ENCODE measurements at regions of chr17 and their contacts with region 1.

Region 1: DNA sequence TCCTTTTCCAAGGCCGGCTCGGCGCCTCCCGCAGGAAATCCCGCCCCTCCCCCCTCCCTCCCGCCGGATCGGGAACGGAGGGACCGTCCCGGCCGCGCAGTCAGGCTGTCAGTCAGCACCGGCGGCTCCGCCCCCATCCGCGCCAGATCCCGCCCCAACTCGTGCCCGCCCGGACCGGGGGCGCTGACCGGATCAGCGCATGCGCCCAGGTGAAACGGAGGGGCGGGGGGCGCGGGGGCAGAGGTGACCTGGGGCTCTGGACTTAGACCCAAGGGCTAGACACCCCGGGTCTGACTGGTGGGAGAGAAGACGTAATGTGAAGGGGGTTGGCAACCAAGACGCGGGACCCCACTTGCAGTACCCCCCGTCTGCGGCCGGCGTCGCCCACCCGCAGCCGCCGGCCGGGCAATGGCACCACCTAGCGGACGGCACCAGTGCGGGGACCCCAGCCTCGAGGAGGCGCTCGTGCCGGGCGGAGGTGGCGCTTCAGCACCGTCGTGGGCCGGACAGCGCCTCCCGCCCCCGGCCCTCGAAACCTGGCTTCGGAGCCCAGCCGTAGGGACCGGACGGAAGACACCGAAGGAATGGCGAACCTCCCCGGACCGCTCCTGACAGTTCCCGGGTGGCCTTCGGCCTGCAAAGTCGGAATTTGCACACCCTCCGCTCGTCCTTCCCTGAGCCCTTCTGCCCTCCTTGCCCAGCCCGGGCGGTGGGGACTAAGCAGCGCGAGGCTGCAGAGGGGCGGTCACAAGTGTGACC is at the start of gene CASKIN2:
- DNase-seq: peak; percentile 77 to 99
- H3K4me3 ChIP-seq: peak within 1 kb of the TSS; percentile 79 to 92 (median 82)
- H3K27ac ChIP-seq: peak within 1 kb of the TSS; percentile 59
- H3K4me1 ChIP-seq: peaks cover 0 to 14% (median 8%) of the 10 kb centered on the region in 4 experiments; a peak in 6 of 7 replicates
- H3K27me3 ChIP-seq: no peaks in the 10 kb centered on the region
- CTCF ChIP-seq: peak; percentile 96 to 100 (median 100)
- EP300 ChIP-seq: 0 out of 3 replicates have a peak, but pooled peaks of 1 of the 2 experiments have one; percentile 21
- POLR2A ChIP-seq: no peak
- RAD21 ChIP-seq: peak; percentile 47 to 77
- total RNA-seq, gene CASKIN2: 28.9 and 32.3 TPM in 2 replicates

Region 2: DNA sequence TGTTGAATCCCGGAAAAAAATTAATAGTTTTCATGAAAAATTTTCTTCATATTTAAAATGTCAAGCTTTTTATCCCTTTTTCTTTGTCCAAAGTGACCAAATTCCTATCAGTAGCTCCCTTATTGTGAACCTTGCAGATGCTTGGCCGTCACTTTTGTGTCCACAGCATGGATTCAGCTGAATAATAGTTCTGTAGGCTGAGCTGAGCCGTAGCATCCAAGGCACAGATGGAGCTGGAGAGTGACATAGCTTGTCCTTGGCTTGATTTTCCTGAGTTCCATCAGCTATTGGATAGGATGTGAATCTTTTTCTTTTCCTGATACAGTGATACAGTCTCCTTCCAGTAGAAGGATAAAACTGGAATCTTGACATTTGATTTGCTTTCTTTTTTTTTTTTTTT is 306.6 kb before region 1 on chr17:
- CTCF ChIA-PET with region 1: no interaction called
- POLR2A ChIA-PET with region 1: no interaction called
- DNase-seq: no peak
- H3K4me3 ChIP-seq: no peak overlapping the region
- H3K27ac ChIP-seq: no peak overlapping the region
- H3K4me1 ChIP-seq: peaks cover 0 to 2% (median 0%) of the 10 kb centered on the region in 4 experiments; a peak in 2 of 7 replicates
- H3K27me3 ChIP-seq: no peaks in the 10 kb centered on the region
- CTCF ChIP-seq: no peak
- EP300 ChIP-seq: no peak
- POLR2A ChIP-seq: no peak
- RAD21 ChIP-seq: no peak

Region 3: DNA sequence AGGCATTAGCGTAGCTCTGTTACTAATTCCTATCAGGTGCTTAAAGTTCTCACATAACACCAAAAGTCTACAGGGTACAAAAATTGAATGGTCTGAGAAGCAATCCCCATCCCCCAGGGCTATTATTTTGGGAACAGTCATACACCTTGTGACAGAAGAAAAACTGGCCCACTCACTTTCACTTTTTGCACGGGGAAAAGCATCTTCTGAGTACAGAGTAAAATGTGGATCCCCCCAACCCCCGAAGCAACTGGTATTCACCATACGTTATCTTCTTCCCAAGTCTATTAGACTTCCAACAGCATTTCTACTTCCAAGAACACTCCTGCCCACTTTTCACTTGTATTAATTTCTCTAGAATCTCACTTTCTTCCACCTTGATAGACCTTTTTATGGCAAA is 266.1 kb before region 1 on chr17:
- CTCF ChIA-PET with region 1: no interaction called
- POLR2A ChIA-PET with region 1: no interaction called
- DNase-seq: no peak
- H3K4me3 ChIP-seq: no peak overlapping the region
- H3K27ac ChIP-seq: no peak overlapping the region
- H3K4me1 ChIP-seq: peaks cover 0 to 7% (median under 1%) of the 10 kb centered on the region in 4 experiments; a peak in 3 of 7 replicates
- H3K27me3 ChIP-seq: no peaks in the 10 kb centered on the region
- CTCF ChIP-seq: no peak
- EP300 ChIP-seq: no peak
- POLR2A ChIP-seq: no peak
- RAD21 ChIP-seq: no peak

Region 4: DNA sequence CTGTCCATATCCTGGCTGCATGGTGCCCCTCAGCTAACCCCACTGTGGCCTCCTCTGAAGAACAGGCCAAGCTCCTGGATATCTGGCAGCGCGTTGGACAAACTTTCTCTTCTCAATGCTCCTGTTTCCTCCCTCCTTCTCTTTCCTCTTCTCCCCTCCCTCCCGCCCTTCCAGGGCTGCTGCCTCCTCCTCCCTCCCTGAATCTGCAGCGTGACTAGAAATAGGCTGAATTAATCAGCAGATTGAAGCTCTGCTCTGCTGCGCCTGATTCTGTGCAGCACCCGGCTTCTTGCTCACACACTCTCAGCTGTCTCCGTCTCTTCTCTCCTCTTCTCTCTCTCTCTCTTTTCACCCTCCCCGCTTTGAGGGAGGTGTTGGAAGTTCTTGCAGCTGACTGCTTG is 39.4 kb before region 1 on chr17:
- CTCF ChIA-PET with region 1: no interaction called
- POLR2A ChIA-PET with region 1: no interaction called
- DNase-seq: no peak
- H3K4me3 ChIP-seq: no peak overlapping the region
- H3K27ac ChIP-seq: no peak overlapping the region
- H3K4me1 ChIP-seq: peaks cover 0 to 7% (median under 1%) of the 10 kb centered on the region in 4 experiments; a peak in 4 of 7 replicates
- H3K27me3 ChIP-seq: no peaks in the 10 kb centered on the region
- CTCF ChIP-seq: no peak
- EP300 ChIP-seq: no peak
- POLR2A ChIP-seq: no peak
- RAD21 ChIP-seq: no peak

Region 5: GRCh38 chr17:75498726-75499213 is 16.9 kb before region 1 on chr17:
- CTCF ChIA-PET with region 1: interaction called, 31 read pairs
- POLR2A ChIA-PET with region 1: interaction called, 35 read pairs
- DNase-seq: no peak
- H3K4me3 ChIP-seq: no peak overlapping the region
- H3K27ac ChIP-seq: no peak overlapping the region
- H3K4me1 ChIP-seq: no peaks in the 10 kb centered on the region
- H3K27me3 ChIP-seq: no peaks in the 10 kb centered on the region
- CTCF ChIP-seq: peak in 2 of 3 experiments; percentile 14 to 22; a peak in 2 of 4 replicates
- EP300 ChIP-seq: no peak
- POLR2A ChIP-seq: peak in 1 of 2 experiments; percentile 49; a peak in 2 of 3 replicates
- RAD21 ChIP-seq: no peak; a peak in 1 of 4 replicates

Region 6: DNA sequence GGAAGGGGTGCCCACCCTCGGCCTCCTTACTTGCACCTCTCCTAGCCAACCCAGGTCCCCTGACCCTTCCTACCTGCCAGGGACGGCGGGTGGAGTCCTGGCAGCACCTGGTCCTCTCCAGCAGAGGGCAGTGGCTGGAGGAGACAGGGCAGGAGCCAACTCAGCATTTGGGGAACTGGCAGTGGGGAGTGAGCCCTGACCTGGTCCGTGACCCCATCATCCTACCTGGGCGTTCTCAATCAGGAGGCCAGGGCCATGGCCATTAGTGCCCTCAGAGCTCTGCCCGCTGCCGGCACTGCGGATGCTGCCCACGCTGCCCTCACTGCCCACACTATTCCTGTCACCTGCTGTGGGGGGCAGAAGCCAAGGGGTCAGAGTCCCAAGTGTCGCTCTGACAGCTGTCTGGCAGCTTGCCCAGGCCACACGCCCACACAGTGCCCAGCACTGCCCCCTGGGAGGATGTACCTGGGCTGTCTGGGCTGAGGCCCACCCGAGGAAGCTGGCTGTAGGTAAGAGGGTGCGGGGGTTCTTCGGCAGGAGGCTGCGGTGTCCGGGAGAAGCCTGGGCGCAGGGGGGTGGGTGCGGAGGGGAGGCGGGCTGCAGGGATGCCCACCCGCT is 11.2 kb before region 1 on chr17:
- CTCF ChIA-PET with region 1: interaction called, 31 read pairs
- POLR2A ChIA-PET with region 1: interaction called, 35 read pairs
- DNase-seq: peak in 1 of 2 experiments; percentile 78
- H3K4me3 ChIP-seq: no peak overlapping the region
- H3K27ac ChIP-seq: no peak overlapping the region
- H3K4me1 ChIP-seq: peaks cover 0 to 2% (median 0%) of the 10 kb centered on the region in 4 experiments; a peak in 1 of 7 replicates
- H3K27me3 ChIP-seq: no peaks in the 10 kb centered on the region
- CTCF ChIP-seq: peak; percentile 82 to 95 (median 94)
- EP300 ChIP-seq: no peak
- POLR2A ChIP-seq: no peak
- RAD21 ChIP-seq: peak; percentile 54 to 72

Region 7: GRCh38 chr17:75576661-75577060 is 61.0 kb after region 1 on chr17:
- CTCF ChIA-PET with region 1: interaction called, 15 read pairs
- POLR2A ChIA-PET with region 1: interaction called, 4 read pairs
- DNase-seq: no peak
- H3K4me3 ChIP-seq: no peak overlapping the region
- H3K27ac ChIP-seq: no peak overlapping the region
- H3K4me1 ChIP-seq: peaks cover 0 to 4% (median 0%) of the 10 kb centered on the region in 4 experiments; a peak in 1 of 7 replicates
- H3K27me3 ChIP-seq: no peaks in the 10 kb centered on the region
- CTCF ChIP-seq: no peak
- EP300 ChIP-seq: no peak
- POLR2A ChIP-seq: no peak
- RAD21 ChIP-seq: no peak

Region 8: GRCh38 chr17:75589012-75589918 is 73.6 kb after region 1 on chr17:
- CTCF ChIA-PET with region 1: interaction called, 14 read pairs
- POLR2A ChIA-PET with region 1: interaction called, 7 read pairs
- DNase-seq: peak; percentile 88 to 94
- H3K4me3 ChIP-seq: peak overlapping the region; percentile 40 to 67 (median 58); a peak in 7 of 8 replicates
- H3K27ac ChIP-seq: no peak overlapping the region; the same call in 1 of the 2 replicates
- H3K4me1 ChIP-seq: peaks cover 0 to 9% (median 3%) of the 10 kb centered on the region in 4 experiments; a peak in 5 of 7 replicates
- H3K27me3 ChIP-seq: peaks cover 0 to 19% (median 5%) of the 10 kb centered on the region in 4 experiments; a peak in 4 of 7 replicates
- CTCF ChIP-seq: peak; percentile 61 to 77 (median 72)
- EP300 ChIP-seq: peak in 1 of 2 experiments; percentile 79; a peak in 1 of 3 replicates
- POLR2A ChIP-seq: peak in 1 of 2 experiments; percentile 45; a peak in 1 of 3 replicates
- RAD21 ChIP-seq: peak; percentile 49 to 57; a peak in 3 of 4 replicates

Measured in H1 (cell line).